Right cardiac atrium (tissue), 5 donors: ENCODE measurements at regions of chr17 and their contacts with region 1.

Region 1: GRCh38 chr17:69773081-69773480 is 301.9 kb upstream of the KCNJ16 start:
- DNase-seq: no peak
- ATAC-seq: no peak
- H3K4me3 ChIP-seq: no peak overlapping the region
- H3K27ac ChIP-seq: no peak overlapping the region
- H3K4me1 ChIP-seq: no peaks in the 10 kb centered on the region
- H3K27me3 ChIP-seq: no peaks in the 10 kb centered on the region

Region 2: DNA sequence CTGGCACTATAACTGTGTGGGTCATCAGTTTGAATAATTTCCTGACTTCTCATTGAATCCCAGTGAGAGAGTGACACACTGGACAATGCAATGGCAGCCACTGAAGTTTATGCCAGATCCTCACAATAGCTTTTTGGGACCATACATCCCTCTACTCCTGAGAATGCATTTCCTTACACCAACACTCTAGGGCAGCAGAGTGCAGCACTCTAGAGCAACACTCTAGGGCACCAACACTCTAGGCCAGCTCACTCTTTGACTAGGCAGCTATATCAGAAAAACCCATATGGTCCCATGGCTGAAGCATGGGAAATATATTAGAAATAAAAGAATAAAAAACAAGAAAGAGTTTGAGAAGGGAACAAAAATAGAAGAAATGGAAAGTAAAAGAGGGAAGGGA is 49.3 kb before region 1 on chr17:
- intact Hi-C with region 1: loop called in 1 of 4 experiments (anchors 10 kb)
- DNase-seq: no peak
- ATAC-seq: peak in 1 of 2 donors; percentile 29
- H3K4me3 ChIP-seq: no peak overlapping the region
- H3K27ac ChIP-seq: no peak overlapping the region
- H3K4me1 ChIP-seq: no peaks in the 10 kb centered on the region
- H3K27me3 ChIP-seq: no peaks in the 10 kb centered on the region